ENCODE measurements at regions of chr19 and their contacts with region 1.

Region 1: GRCh38 chr19:48391107-48391986 is at the start of gene KDELR1:
- DNase-seq: peak; percentile 91
- total RNA-seq, gene KDELR1: 70.1 TPM

Region 2: GRCh38 chr19:48445606-48446481 is 54.5 kb after region 1 on chr19 and contains the start of gene GRWD1:
- intact Hi-C with region 1: loop called (anchors 5 kb)
- DNase-seq: peak; percentile 95
- total RNA-seq, gene GRWD1: 17.5 TPM

Measured in cardiac septum (tissue), 1 donor.